RWPE1 (cell line): ENCODE measurements at regions of chr3 and their contacts with region 1.

Region 1: GRCh38 chr3:141738022-141738890 is at the start of gene RNF7:
- DNase-seq: peak; percentile 96
- H3K27ac ChIP-seq: peak within 1 kb of the TSS; percentile 93
- CTCF ChIP-seq: peak; percentile 98

Region 2: GRCh38 chr3:141875374-141875892 is 137.2 kb after region 1 on chr3:
- CTCF ChIA-PET with region 1: interaction called, 37 read pairs
- POLR2A ChIA-PET with region 1: interaction called, 7 read pairs
- DNase-seq: peak; percentile 89
- H3K27ac ChIP-seq: peak overlapping the region; percentile 100
- CTCF ChIP-seq: peak; percentile 94

Region 3: DNA sequence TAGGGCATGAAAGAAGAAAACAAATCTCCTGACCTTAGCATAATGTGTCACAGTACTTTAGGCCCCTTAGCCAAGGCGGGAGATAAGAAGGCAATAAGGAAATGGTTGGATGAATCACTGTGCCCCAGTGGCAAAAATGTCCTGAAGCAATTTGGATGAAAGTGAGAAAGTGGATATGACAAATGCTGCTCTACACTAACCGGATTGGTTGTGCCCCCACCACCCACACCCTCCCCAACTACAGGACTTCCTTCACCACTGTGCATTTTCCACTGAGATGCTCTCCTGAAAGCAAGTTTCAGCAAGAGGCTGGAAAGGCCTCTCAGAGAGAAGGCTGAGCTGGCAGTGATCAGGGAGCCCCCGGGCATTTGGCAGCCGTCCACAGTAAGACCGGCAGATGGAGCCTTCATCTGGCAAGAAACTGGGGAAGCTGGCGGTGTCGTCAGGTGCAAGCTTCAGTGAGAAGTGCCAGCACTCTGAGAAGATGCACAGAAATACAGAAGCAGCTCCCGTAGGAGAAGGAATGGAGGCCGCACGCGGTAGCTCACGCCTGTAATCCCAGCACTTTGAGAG is 202.0 kb after region 1 on chr3:
- CTCF ChIA-PET with region 1: no interaction called
- POLR2A ChIA-PET with region 1: no interaction called
- DNase-seq: peak; percentile 95
- H3K27ac ChIP-seq: peak overlapping the region; percentile 98
- CTCF ChIP-seq: no peak